Activated naive CD4-positive, alpha-beta T cell treated with anti-CD3 and anti-CD28 coated beads, Interleukin-2, amount 10 ng/mL, durations not matched to agents 7 days and 5 days (primary cell): ENCODE measurements at regions of chr2 and their contacts with region 1.

Region 1: DNA sequence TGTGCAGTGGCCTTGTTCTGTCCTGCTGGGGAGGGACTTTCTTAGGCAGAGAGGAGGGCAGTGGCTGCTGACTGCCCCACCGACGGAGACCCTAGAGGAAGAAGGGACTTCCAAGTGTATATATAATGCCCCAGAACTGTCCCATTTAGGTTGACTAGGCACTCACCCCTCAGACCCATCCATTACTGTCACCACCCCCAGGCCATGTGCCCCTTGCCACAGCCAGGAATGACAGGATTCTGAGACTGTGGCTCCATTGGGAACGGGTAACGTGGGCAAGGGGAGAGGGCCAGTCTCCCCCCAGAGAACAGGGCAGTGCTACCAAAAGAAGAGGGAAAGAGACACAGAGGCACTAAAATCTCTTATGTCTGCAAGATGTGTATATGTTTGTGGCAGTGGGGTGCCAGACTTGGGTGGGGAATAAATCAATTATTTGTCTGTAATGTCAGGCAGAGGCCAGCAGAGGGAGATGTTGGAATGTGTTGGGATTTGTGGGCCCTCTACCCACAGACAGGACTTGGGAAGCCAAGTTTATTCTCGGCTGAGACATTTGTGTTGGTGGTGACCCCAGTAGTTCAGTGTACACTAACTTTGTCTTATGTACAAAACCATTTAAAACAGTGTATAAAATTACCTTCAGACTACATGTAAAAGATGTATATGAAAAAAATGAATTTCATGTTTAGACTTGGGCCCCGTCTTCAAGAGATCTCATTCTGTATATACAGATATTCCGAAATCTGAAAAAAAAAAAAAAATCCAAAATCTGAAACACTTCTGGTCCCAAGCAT is 24.0 kb upstream of the TMEM37 start:
- DNase-seq: peak; percentile 36
- H3K4me3 Mint-ChIP-seq: no peak overlapping the region
- H3K27ac Mint-ChIP-seq: no peak overlapping the region
- H3K4me1 Mint-ChIP-seq: no peaks in the 10 kb centered on the region
- H3K27me3 Mint-ChIP-seq: no peaks in the 10 kb centered on the region

Region 2: DNA sequence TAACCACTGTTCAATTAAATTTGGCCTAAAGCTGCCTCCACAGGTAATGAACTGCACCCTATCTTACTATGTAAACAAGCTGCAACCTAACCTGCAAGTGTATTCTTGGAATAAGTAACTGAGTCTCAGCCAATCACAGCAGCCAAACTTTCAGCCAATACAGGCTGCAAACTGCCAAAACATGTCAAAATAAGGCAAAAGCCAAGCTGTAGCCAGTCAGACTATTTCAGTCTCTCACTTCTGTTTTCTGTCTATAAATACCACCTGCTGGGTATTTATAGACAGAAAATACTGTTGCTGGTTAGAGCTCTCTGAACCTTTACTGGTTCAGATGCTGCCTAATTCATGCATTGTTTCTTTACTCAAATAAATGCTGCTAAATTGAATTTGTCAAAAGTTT is 55.3 kb before region 1 on chr2:
- CTCF ChIA-PET with region 1: no interaction called
- DNase-seq: no peak
- H3K4me3 Mint-ChIP-seq: no peak overlapping the region
- H3K27ac Mint-ChIP-seq: no peak overlapping the region
- H3K4me1 Mint-ChIP-seq: peaks cover 5% of the 10 kb centered on the region
- H3K27me3 Mint-ChIP-seq: peaks cover 3% of the 10 kb centered on the region

Region 3: DNA sequence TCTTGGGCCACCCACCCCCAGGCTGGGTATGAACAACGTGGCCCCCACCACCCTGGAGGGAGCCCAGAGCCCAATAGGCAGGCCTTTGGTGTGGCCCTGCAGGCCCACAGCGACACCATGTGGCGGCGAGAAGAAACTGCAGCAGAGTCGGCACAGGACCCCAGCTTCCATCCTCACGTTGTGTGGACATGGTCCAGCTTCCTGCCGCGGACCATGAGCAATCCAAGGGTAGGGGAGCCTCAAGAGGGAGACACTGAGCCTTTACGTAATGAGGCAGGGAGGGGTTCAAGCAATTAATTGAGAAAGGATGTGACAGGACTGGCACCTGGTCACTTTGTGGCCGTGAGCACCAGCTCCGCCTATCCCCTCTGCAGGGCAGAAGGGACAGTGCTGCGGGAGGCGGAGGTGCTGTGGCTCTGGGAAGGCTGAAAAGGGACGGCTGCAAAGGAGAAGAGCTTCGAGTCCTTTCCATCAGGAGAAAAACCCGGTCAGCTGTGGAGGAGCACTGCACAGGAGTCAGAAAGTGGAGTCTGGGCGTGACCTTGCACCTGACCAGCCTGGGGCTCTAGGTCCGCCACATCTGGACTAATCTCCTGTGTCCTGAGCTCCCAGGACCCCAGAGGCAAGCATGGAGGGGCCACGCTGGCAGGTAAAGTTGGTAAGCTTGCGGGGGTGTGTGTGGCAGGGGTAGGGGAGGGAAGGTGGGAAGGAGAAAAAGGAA is 68.8 kb after region 1 on chr2:
- CTCF ChIA-PET with region 1: interaction called, 38 read pairs
- DNase-seq: peak; percentile 47
- H3K4me3 Mint-ChIP-seq: no peak overlapping the region
- H3K27ac Mint-ChIP-seq: no peak overlapping the region
- H3K4me1 Mint-ChIP-seq: no peaks in the 10 kb centered on the region
- H3K27me3 Mint-ChIP-seq: peaks cover 4% of the 10 kb centered on the region

Region 4: DNA sequence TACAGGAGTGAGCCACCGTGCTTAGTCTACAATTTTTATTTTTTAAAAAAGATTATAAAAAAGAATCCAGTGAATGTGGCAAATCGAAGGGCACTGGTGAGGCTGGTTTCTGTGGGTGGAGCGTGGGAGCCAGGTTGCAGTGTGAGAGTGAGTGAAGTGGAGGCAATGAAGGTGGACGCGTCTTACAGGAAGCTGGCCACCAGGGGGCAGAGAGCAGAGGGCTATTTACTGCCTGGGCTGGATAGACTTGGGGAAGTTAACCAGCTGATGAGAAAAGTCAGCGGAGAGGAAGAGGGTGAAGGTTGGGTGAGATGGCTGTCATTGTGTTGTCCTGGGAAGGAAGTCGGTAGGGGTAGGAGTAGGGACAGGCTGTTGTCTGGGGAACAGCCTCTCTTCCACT is 109.8 kb after region 1 on chr2:
- CTCF ChIA-PET with region 1: no interaction called
- DNase-seq: peak; percentile 61
- H3K4me3 Mint-ChIP-seq: no peak overlapping the region
- H3K27ac Mint-ChIP-seq: no peak overlapping the region
- H3K4me1 Mint-ChIP-seq: no peaks in the 10 kb centered on the region
- H3K27me3 Mint-ChIP-seq: peaks cover 24% of the 10 kb centered on the region